CD4-positive, alpha-beta T cell (primary cell): ENCODE measurements at regions of chr1 and their contacts with region 1.

Region 1: DNA sequence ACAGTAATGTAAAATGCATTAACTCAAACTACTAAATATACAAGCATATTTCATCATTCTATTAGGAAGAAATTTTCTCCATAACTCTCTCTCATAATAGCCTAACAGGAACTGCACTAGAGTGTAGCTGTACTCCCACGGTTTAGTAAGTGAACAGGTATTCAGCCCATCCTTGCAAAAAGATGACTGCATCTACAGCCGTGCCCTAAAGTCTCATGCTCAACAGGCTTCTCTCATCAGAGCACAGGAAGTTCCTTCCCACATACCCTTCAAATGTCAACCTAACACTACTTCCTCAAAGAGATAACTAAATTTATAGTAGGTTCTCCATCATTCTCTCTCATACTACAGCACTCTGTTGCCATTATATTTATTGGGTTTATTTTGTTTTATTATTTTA is 251.6 kb downstream of the AKT3 start:
- DNase-seq: peak in 8 of 14 experiments; percentile 5 to 67 (median 29)
- ATAC-seq: peak; percentile 78
- H3K4me3 ChIP-seq: no peak overlapping the region
- H3K4me3 Mint-ChIP-seq: peak overlapping the region; percentile 78
- H3K27ac ChIP-seq: peak overlapping the region in 1 of 2 donors; percentile 39
- H3K27ac Mint-ChIP-seq: peak overlapping the region; percentile 62
- H3K4me1 ChIP-seq: peaks cover 12% of the 10 kb centered on the region
- H3K4me1 Mint-ChIP-seq: peaks cover 33% of the 10 kb centered on the region
- H3K27me3 ChIP-seq: no peaks in the 10 kb centered on the region
- H3K27me3 Mint-ChIP-seq: no peaks in the 10 kb centered on the region
- CTCF ChIP-seq: no peak

Region 2: DNA sequence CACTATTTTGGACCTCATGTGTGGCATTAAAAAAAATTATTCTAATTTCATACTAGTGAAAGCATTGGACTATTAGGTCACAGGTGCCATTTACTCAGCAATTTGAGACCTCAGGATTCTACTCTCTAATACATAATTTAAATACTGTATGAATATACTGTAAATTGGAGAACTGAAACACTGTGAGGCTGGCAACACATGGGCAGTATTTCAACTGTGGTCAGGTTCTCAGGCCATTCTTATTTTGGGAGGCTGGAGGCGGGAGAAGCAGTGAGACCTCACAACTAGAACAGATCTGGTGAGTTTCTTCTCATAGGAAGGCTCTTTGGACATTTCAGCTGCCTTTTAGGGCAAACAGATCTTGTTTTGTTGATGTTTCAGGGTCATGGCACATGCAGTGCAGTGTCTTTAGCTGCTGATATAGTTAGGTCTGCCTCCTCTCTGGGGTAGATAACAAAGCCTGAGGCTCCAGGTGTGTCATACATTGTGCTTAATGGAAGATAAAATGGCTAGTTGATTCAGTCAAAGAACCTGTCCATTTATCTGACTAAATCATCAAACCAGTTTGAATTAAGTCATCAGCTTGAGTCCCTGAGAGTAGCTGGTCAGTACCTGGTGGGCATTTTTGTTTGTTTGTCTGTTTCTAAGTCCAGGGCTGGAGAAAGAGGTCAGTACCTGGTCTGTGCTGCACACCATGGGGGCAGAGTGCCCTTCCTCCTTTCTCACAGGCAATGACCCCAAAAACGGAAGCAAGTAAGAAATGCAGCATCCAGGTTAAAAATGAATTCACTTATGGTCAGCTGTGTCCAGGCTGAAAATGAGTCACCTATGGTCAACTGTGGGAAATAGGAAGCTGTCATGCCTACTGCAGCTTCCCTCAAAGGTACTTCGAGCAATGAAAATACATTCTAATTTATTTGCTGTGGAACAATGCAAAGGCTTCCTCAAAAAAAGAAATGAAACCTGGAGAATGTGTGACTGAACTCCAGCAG is 126.4 kb before region 1 on chr1:
- CTCF ChIA-PET with region 1: no interaction called
- POLR2A ChIA-PET with region 1: no interaction called
- intact Hi-C with region 1: no loop called
- DNase-seq: peak in 2 of 14 experiments; percentile 26 to 34
- ATAC-seq: no peak
- H3K4me3 ChIP-seq: no peak overlapping the region
- H3K4me3 Mint-ChIP-seq: no peak overlapping the region
- H3K27ac ChIP-seq: no peak overlapping the region
- H3K27ac Mint-ChIP-seq: no peak overlapping the region
- H3K4me1 ChIP-seq: peaks cover 3% of the 10 kb centered on the region
- H3K4me1 Mint-ChIP-seq: peaks cover 20% of the 10 kb centered on the region
- H3K27me3 ChIP-seq: no peaks in the 10 kb centered on the region
- H3K27me3 Mint-ChIP-seq: no peaks in the 10 kb centered on the region
- CTCF ChIP-seq: no peak

Region 3: DNA sequence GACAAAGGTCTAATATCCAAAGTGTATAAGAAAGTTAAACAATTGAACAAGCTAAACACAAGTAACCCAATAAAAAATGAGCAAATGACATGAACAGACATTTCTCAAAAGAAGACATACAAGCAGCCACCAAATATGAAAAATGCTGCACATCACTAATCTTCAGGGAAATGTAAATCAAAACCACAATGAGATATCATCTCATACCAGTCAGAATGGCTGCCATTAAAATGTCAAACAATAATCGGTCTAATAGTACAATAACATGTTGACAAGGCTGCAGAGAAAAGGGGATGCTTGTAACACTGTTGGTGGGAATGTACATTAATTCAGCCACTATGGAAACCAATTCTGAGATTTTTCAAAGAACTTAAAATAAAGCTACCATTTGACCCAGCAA is 12.5 kb before region 1 on chr1:
- CTCF ChIA-PET with region 1: no interaction called
- POLR2A ChIA-PET with region 1: no interaction called
- intact Hi-C with region 1: loop called in 1 of 2 experiments (anchors 2 kb)
- DNase-seq: no peak
- ATAC-seq: no peak
- H3K4me3 ChIP-seq: no peak overlapping the region
- H3K4me3 Mint-ChIP-seq: no peak overlapping the region
- H3K27ac ChIP-seq: no peak overlapping the region
- H3K27ac Mint-ChIP-seq: no peak overlapping the region
- H3K4me1 ChIP-seq: no peaks in the 10 kb centered on the region
- H3K4me1 Mint-ChIP-seq: peaks cover 10% of the 10 kb centered on the region
- H3K27me3 ChIP-seq: no peaks in the 10 kb centered on the region
- H3K27me3 Mint-ChIP-seq: no peaks in the 10 kb centered on the region
- CTCF ChIP-seq: no peak

Region 4: GRCh38 chr1:243917177-243917862 is 318.9 kb after region 1 on chr1:
- CTCF ChIA-PET with region 1: no interaction called
- POLR2A ChIA-PET with region 1: no interaction called
- intact Hi-C with region 1: no loop called
- DNase-seq: peak in 5 of 14 experiments; percentile 2 to 28 (median 14)
- ATAC-seq: peak; percentile 37
- H3K4me3 ChIP-seq: peak overlapping the region; percentile 55
- H3K4me3 Mint-ChIP-seq: peak overlapping the region; percentile 87
- H3K27ac ChIP-seq: no peak overlapping the region
- H3K27ac Mint-ChIP-seq: no peak overlapping the region
- H3K4me1 ChIP-seq: peaks cover 19% of the 10 kb centered on the region
- H3K4me1 Mint-ChIP-seq: peaks cover 15% of the 10 kb centered on the region
- H3K27me3 ChIP-seq: peaks cover 30 to 33% of the 10 kb centered on the region in 2 experiments
- H3K27me3 Mint-ChIP-seq: peaks cover 73% of the 10 kb centered on the region
- CTCF ChIP-seq: no peak